ENCODE measurements at regions of chr13 and their contacts with region 1.

Region 1: DNA sequence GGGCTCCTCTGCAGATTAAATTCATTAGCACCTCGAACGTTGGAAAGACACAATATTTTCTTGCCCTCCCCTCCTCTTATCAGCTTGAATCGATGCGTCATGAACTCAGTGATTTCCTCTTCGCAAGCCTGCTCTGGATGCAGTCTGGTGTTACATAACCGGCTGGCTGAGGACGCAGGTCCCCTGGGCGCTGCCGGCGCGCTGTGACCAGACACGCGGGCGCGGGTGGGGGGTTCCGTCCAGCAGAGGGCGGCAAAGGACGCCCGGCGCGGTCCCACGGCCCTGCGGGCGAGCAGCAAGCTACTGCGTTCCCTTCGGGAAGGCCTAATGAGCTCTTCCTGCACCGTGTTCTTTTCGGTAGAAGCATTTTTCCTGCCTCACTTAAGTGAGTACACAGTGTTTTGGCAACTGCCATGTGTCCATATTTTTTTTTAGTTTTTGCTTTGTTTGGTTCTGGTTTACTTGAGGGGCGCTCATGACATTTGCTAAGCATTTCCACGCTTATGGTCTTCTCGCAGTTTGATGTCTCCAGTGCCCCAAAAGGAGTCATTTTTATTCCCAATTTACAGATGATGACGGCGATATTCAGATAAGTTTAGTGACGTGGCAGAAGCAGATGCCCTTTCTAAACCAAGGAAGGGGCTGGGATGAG is 112.2 kb upstream of the MBNL2 start:
- DNase-seq: peak; percentile 88 to 96
- H3K4me3 ChIP-seq: no peak overlapping the region
- H3K4me3 Mint-ChIP-seq: peak overlapping the region; percentile 52
- H3K27ac Mint-ChIP-seq: peak overlapping the region; percentile 36
- H3K4me1 ChIP-seq: peaks cover 30% of the 10 kb centered on the region
- H3K4me1 Mint-ChIP-seq: peaks cover 36% of the 10 kb centered on the region
- H3K27me3 ChIP-seq: no peaks in the 10 kb centered on the region
- H3K27me3 Mint-ChIP-seq: no peaks in the 10 kb centered on the region
- CTCF ChIP-seq: peak; percentile 91 to 93

Region 2: GRCh38 chr13:97124916-97125809 is 15.2 kb after region 1 on chr13:
- CTCF ChIA-PET with region 1: interaction called, 15 read pairs
- POLR2A ChIA-PET with region 1: no interaction called
- intact Hi-C with region 1: loop called (anchors 1 kb)
- DNase-seq: peak; percentile 44 to 46
- H3K4me3 ChIP-seq: no peak overlapping the region
- H3K4me3 Mint-ChIP-seq: no peak overlapping the region
- H3K27ac Mint-ChIP-seq: no peak overlapping the region
- H3K4me1 ChIP-seq: peaks cover 62% of the 10 kb centered on the region
- H3K4me1 Mint-ChIP-seq: peaks cover 59% of the 10 kb centered on the region
- H3K27me3 ChIP-seq: no peaks in the 10 kb centered on the region
- H3K27me3 Mint-ChIP-seq: no peaks in the 10 kb centered on the region
- CTCF ChIP-seq: peak in 1 of 2 experiments; percentile 14

Region 3: DNA sequence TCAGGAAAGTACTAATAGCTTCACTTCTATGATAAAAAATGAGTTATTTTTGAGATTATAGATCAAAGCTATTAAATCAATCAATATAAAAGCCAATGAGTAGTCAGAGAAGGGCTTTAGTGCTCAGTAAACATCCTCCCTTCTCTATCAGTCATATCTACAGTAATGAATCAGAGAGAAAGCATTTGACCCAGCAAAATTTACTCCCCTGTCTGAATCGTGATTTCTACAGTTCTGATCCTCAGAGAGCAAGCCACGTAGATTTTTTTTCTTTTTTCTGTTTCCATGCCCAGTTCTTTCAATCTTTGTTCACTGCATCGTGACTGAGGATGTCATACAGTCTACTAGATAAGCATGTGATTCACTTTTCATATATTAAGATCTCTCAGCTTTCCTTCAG is 96.0 kb after region 1 on chr13:
- CTCF ChIA-PET with region 1: interaction called, 53 read pairs
- POLR2A ChIA-PET with region 1: no interaction called
- intact Hi-C with region 1: no loop called
- DNase-seq: no peak
- H3K4me3 ChIP-seq: no peak overlapping the region
- H3K4me3 Mint-ChIP-seq: no peak overlapping the region
- H3K27ac Mint-ChIP-seq: no peak overlapping the region
- H3K4me1 ChIP-seq: peaks cover 11% of the 10 kb centered on the region; the same call in 1 of the 2 replicates
- H3K4me1 Mint-ChIP-seq: peaks cover 7% of the 10 kb centered on the region
- H3K27me3 ChIP-seq: no peaks in the 10 kb centered on the region
- H3K27me3 Mint-ChIP-seq: no peaks in the 10 kb centered on the region
- CTCF ChIP-seq: no peak

Region 4: DNA sequence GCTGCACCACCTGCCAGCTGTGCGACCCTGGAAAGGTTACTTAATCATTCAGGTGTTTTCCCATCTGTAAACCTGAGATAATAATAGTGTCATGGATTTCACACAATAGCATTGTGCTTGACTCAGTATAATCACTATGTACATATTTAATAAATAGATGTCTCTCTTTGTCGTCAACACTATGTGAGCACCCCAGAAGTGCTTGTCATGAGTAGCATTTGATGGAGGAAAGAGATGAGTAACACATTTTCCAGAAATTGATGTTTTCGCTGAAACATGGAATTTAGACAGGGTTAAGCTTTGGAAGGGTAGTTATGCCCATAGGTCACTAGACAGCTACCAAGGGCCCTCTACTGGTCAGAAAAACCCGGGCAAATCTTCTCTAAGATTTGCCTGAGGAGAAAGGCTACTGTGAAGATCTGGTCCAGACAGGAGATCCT is 102.7 kb after region 1 on chr13:
- CTCF ChIA-PET with region 1: interaction called, 53 read pairs
- POLR2A ChIA-PET with region 1: no interaction called
- intact Hi-C with region 1: loop called (anchors 1 kb)
- DNase-seq: peak in 1 of 2 experiments; percentile 65
- H3K4me3 ChIP-seq: no peak overlapping the region
- H3K4me3 Mint-ChIP-seq: no peak overlapping the region
- H3K27ac Mint-ChIP-seq: no peak overlapping the region
- H3K4me1 ChIP-seq: peaks cover 24% of the 10 kb centered on the region
- H3K4me1 Mint-ChIP-seq: peaks cover 22% of the 10 kb centered on the region
- H3K27me3 ChIP-seq: no peaks in the 10 kb centered on the region
- H3K27me3 Mint-ChIP-seq: no peaks in the 10 kb centered on the region
- CTCF ChIP-seq: peak; percentile 59 to 69

Region 5: GRCh38 chr13:97221989-97222700 is 112.2 kb after region 1 on chr13 and contains the start of gene MBNL2:
- CTCF ChIA-PET with region 1: interaction called, 38 read pairs
- POLR2A ChIA-PET with region 1: interaction called, 5 read pairs
- intact Hi-C with region 1: loop called (anchors 2 kb)
- DNase-seq: peak; percentile 91 to 92
- H3K4me3 ChIP-seq: peak within 1 kb of the TSS; percentile 51
- H3K4me3 Mint-ChIP-seq: peak within 1 kb of the TSS; percentile 95
- H3K27ac Mint-ChIP-seq: peak within 1 kb of the TSS; percentile 89
- H3K4me1 ChIP-seq: peaks cover 43% of the 10 kb centered on the region
- H3K4me1 Mint-ChIP-seq: peaks cover 40% of the 10 kb centered on the region
- H3K27me3 ChIP-seq: no peaks in the 10 kb centered on the region
- H3K27me3 Mint-ChIP-seq: no peaks in the 10 kb centered on the region
- CTCF ChIP-seq: no peak
- total RNA-seq, gene MBNL2: 41.6 TPM in 2 replicates

Region 6: DNA sequence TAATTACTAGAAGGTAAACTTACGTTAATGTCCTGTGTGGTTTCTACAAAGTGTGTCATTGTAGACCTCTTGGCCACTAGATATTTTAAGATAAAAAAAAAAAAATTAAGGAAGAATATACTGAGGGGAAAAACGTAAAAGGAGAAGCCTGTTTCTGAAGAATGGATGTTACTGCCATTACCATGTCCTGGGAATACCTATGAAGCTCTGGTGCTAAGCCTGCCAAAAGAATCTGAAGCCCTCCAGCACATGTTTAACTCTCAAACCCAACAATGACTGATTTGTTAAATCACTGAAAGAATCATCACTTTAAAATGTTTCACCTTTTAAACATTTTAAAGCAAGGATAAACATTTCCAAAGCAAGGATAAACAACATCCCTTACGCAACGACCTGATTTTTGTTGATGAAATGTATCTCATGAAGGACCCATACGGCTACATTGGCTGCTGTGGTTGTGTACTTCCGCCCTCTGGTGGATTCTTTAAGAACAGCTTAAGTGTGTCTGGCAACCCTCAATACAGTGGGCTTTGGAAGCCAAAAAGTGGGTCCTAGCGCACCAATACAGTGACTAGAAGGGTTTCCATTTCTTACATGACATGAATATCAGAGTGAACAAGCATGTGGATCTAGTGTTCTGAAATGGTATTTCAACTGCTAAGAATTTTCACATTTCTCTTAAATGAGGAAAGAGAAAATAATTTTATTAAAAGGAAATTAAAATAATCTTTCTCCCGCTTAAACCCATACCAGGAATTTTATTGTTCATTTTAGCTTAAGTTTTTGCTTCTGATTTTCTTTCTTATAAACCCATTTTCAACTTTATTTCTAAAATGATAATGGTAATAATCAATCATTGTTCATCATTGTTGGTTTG is 249.5 kb after region 1 on chr13:
- CTCF ChIA-PET with region 1: interaction called, 24 read pairs
- POLR2A ChIA-PET with region 1: no interaction called
- intact Hi-C with region 1: loop called (anchors 1 kb)
- DNase-seq: peak; percentile 54 to 80
- H3K4me3 ChIP-seq: no peak overlapping the region
- H3K4me3 Mint-ChIP-seq: no peak overlapping the region
- H3K27ac Mint-ChIP-seq: no peak overlapping the region
- H3K4me1 ChIP-seq: peaks cover 6% of the 10 kb centered on the region; the same call in 1 of the 2 replicates
- H3K4me1 Mint-ChIP-seq: peaks cover 21% of the 10 kb centered on the region
- H3K27me3 ChIP-seq: no peaks in the 10 kb centered on the region
- H3K27me3 Mint-ChIP-seq: no peaks in the 10 kb centered on the region
- CTCF ChIP-seq: peak; percentile 83 to 85